ENCODE measurements at regions of chrX and their contacts with region 1.

Region 1: GRCh38 chrX:130144509-130144908 is 21.1 kb downstream of the AIFM1 start:
- DNase-seq: peak in 1 of 2 donors; percentile 12
- ATAC-seq: no peak
- H3K4me3 ChIP-seq: no peak overlapping the region
- H3K4me3 Mint-ChIP-seq: no peak overlapping the region
- H3K27ac ChIP-seq: no peak overlapping the region
- H3K27ac Mint-ChIP-seq: no peak overlapping the region
- H3K4me1 ChIP-seq: no peaks in the 10 kb centered on the region
- H3K4me1 Mint-ChIP-seq: no peaks in the 10 kb centered on the region
- H3K27me3 ChIP-seq: no peaks in the 10 kb centered on the region
- H3K27me3 Mint-ChIP-seq: no peaks in the 10 kb centered on the region
- CTCF ChIP-seq: no peak

Region 2: GRCh38 chrX:130196466-130196865 is 52.0 kb after region 1 on chrX:
- intact Hi-C with region 1: loop called (anchors 1 kb)
- DNase-seq: no peak
- ATAC-seq: no peak
- H3K4me3 ChIP-seq: no peak overlapping the region
- H3K4me3 Mint-ChIP-seq: no peak overlapping the region
- H3K27ac ChIP-seq: no peak overlapping the region
- H3K27ac Mint-ChIP-seq: no peak overlapping the region
- H3K4me1 ChIP-seq: no peaks in the 10 kb centered on the region
- H3K4me1 Mint-ChIP-seq: no peaks in the 10 kb centered on the region
- H3K27me3 ChIP-seq: no peaks in the 10 kb centered on the region
- H3K27me3 Mint-ChIP-seq: peaks cover 0 to 5% of the 10 kb centered on the region in 2 donors
- CTCF ChIP-seq: no peak

Measured in natural killer cell (primary cell).